ENCODE measurements at regions of chr18 and their contacts with region 1.

Region 1: GRCh38 chr18:58699551-58699950 is 28.3 kb downstream of the MALT1 start:
- DNase-seq: no peak
- H3K4me3 Mint-ChIP-seq: no peak overlapping the region
- H3K27ac Mint-ChIP-seq: no peak overlapping the region
- H3K4me1 Mint-ChIP-seq: peaks cover 40% of the 10 kb centered on the region
- H3K27me3 Mint-ChIP-seq: no peaks in the 10 kb centered on the region

Region 2: DNA sequence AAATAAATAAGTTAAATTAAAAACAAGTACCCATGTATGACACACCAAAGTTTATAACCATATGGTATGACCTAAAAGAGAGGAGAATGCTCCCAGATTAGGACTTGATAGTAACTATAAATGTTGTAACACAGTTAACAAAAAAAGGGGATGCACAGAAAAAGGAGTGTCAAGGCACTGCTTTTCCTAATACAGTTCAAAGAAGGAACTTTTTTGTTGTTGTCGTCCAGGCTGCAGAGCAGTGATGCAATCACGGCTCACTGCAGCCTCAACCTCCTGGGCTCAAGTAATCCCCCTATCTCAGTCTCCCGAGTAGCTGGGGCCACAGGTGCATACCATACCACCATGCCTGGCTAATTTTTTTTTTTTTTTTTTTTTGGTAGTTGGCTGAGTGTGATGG is 1080.6 kb before region 1 on chr18:
- CTCF ChIA-PET with region 1: no interaction called
- POLR2A ChIA-PET with region 1: no interaction called
- intact Hi-C with region 1: no loop called
- DNase-seq: no peak
- H3K4me3 Mint-ChIP-seq: no peak overlapping the region
- H3K27ac Mint-ChIP-seq: no peak overlapping the region
- H3K4me1 Mint-ChIP-seq: peaks cover 29% of the 10 kb centered on the region
- H3K27me3 Mint-ChIP-seq: no peaks in the 10 kb centered on the region

Region 3: GRCh38 chr18:58402247-58402646 is 297.3 kb before region 1 on chr18:
- CTCF ChIA-PET with region 1: no interaction called
- POLR2A ChIA-PET with region 1: no interaction called
- intact Hi-C with region 1: loop called (anchors 5 kb)
- DNase-seq: no peak
- H3K4me3 Mint-ChIP-seq: no peak overlapping the region
- H3K27ac Mint-ChIP-seq: no peak overlapping the region
- H3K4me1 Mint-ChIP-seq: peaks cover 15% of the 10 kb centered on the region
- H3K27me3 Mint-ChIP-seq: peaks cover 2% of the 10 kb centered on the region

Region 4: DNA sequence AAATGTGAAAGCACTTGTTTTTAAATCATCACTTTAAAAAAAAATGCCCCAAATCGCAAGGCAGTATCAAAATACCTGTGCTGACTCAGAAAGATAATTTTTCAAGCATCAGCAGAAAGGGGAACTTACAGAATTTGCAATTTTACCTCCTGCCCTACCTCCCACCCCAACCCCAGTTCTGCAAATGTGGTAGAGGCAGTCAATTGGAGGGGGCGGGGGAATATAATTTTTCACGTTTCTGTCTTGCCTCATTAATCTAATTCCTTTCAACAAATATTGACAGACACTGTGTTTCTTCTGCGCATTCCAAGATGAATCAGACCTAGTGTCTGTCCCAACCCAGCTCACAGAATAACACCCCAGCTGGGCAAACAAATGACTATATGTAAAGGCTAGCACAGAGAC is 147.5 kb before region 1 on chr18:
- CTCF ChIA-PET with region 1: no interaction called
- POLR2A ChIA-PET with region 1: no interaction called
- intact Hi-C with region 1: loop called (anchors 1 kb)
- DNase-seq: peak; percentile 56
- H3K4me3 Mint-ChIP-seq: no peak overlapping the region
- H3K27ac Mint-ChIP-seq: no peak overlapping the region
- H3K4me1 Mint-ChIP-seq: peaks cover 44% of the 10 kb centered on the region
- H3K27me3 Mint-ChIP-seq: no peaks in the 10 kb centered on the region

Region 5: DNA sequence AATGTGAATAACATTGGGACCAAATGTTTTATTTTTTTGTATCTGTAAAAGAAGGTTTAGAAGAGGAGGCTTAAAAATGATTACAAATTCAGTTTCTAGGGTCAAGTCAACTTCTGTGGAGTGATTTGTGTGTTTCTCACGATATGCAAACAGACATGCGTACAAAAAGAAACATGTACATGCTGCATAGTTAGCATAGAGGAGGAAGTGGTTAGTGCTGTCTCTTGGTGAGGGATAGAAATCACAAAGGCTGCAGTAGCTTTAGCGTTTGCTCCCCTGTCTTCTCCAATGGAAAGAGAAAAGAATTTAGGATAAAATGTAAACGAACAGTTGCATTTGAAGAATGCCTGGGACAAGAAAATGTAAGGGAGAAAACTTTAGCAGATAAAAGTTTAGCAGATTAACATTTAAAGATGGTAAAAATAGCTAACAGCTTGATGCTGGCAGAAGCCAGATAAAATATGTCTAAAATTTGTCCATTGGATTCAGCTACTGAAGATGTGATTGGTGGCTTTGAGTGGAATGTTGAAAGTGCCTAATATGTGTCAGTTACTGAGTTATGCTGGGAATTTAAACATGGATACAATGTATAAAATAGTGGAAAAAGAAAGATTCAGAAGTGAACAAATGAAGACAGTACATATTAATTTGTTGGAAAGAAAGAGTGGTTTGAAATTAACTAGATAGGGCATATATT is 16.7 kb after region 1 on chr18:
- CTCF ChIA-PET with region 1: interaction called, 3 read pairs
- POLR2A ChIA-PET with region 1: no interaction called
- intact Hi-C with region 1: loop called (anchors 2 kb)
- DNase-seq: no peak
- H3K4me3 Mint-ChIP-seq: no peak overlapping the region
- H3K27ac Mint-ChIP-seq: peak overlapping the region; percentile 46
- H3K4me1 Mint-ChIP-seq: peaks cover 44% of the 10 kb centered on the region
- H3K27me3 Mint-ChIP-seq: no peaks in the 10 kb centered on the region

Region 6: DNA sequence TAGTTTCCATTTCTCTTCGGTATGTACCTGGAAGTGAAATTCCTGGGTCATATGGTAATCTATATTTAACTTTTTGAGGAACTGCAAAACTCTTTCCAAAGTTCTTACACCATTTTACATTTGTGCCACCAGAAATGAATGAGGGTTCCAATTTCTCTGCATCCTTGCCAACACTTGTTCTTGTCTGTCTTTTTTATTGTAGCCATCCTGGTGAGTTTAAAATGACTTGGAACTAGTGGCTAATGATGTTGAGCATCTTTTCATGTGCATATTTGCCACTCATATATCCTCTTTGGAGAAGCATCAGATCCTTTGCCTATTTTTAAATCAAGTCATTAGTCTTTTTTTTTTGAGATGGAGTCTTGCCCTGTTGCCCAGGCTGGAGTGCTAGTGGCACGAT is 31.1 kb after region 1 on chr18:
- CTCF ChIA-PET with region 1: no interaction called
- POLR2A ChIA-PET with region 1: no interaction called
- intact Hi-C with region 1: loop called (anchors 5 kb)
- DNase-seq: no peak
- H3K4me3 Mint-ChIP-seq: no peak overlapping the region
- H3K27ac Mint-ChIP-seq: no peak overlapping the region
- H3K4me1 Mint-ChIP-seq: peaks cover 6% of the 10 kb centered on the region
- H3K27me3 Mint-ChIP-seq: no peaks in the 10 kb centered on the region

Region 7: GRCh38 chr18:58761241-58761969 is 61.9 kb after region 1 on chr18:
- CTCF ChIA-PET with region 1: interaction called, 15 read pairs
- POLR2A ChIA-PET with region 1: no interaction called
- intact Hi-C with region 1: loop called (anchors 5 kb)
- DNase-seq: peak; percentile 41
- H3K4me3 Mint-ChIP-seq: no peak overlapping the region
- H3K27ac Mint-ChIP-seq: no peak overlapping the region
- H3K4me1 Mint-ChIP-seq: peaks cover 18% of the 10 kb centered on the region
- H3K27me3 Mint-ChIP-seq: peaks cover 13% of the 10 kb centered on the region

Region 8: DNA sequence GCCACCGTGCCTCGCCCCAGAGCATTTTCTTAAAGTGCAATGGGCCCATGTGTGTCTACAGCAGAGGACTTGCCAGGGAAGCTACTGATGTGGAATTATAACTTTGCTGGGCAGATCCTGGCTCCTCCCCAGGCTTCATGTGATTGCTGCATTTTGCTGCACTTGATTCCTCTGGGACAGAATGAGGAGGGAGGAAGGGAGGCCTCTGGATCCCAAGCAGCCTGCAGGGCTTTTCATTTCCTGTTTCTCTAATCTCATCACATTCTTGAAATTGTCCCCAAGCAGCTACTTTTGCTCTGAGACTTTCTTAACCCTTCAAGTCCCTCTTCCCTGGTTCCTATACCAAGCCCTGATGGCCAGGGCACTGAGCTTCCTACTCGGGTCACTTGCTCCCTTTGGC is 305.7 kb after region 1 on chr18:
- CTCF ChIA-PET with region 1: no interaction called
- POLR2A ChIA-PET with region 1: no interaction called
- intact Hi-C with region 1: no loop called
- DNase-seq: no peak
- H3K4me3 Mint-ChIP-seq: no peak overlapping the region
- H3K27ac Mint-ChIP-seq: no peak overlapping the region
- H3K4me1 Mint-ChIP-seq: no peaks in the 10 kb centered on the region
- H3K27me3 Mint-ChIP-seq: no peaks in the 10 kb centered on the region

Region 9: GRCh38 chr18:59085797-59086196 is 386.2 kb after region 1 on chr18:
- CTCF ChIA-PET with region 1: no interaction called
- POLR2A ChIA-PET with region 1: no interaction called
- intact Hi-C with region 1: no loop called
- DNase-seq: no peak
- H3K4me3 Mint-ChIP-seq: no peak overlapping the region
- H3K27ac Mint-ChIP-seq: no peak overlapping the region
- H3K4me1 Mint-ChIP-seq: peaks cover 8% of the 10 kb centered on the region
- H3K27me3 Mint-ChIP-seq: peaks cover 16% of the 10 kb centered on the region

Measured in activated CD4-positive, alpha-beta memory T cell treated with anti-CD3 and anti-CD28 coated beads for 36 hours (primary cell).